Activated naive CD4-positive, alpha-beta T cell treated with anti-CD3 and anti-CD28 coated beads for 36 hours (primary cell): ENCODE measurements at regions of chr10 and their contacts with region 1.

Region 1: GRCh38 chr10:80504158-80504811 is 33.4 kb upstream of the SH2D4B start:
- DNase-seq: no peak
- H3K4me3 Mint-ChIP-seq: no peak overlapping the region
- H3K27ac Mint-ChIP-seq: peak overlapping the region; percentile 54
- H3K4me1 Mint-ChIP-seq: peaks cover 64% of the 10 kb centered on the region
- H3K27me3 Mint-ChIP-seq: no peaks in the 10 kb centered on the region

Region 2: GRCh38 chr10:80453701-80454513 is 50.4 kb before region 1 on chr10 and contains the start of gene TSPAN14:
- CTCF ChIA-PET with region 1: interaction called, 916 read pairs
- intact Hi-C with region 1: loop called (anchors 1 kb)
- DNase-seq: peak; percentile 74
- H3K4me3 Mint-ChIP-seq: peak within 1 kb of the TSS; percentile 98
- H3K27ac Mint-ChIP-seq: peak within 1 kb of the TSS; percentile 93
- H3K4me1 Mint-ChIP-seq: peaks cover 44% of the 10 kb centered on the region
- H3K27me3 Mint-ChIP-seq: no peaks in the 10 kb centered on the region
- total RNA-seq, gene TSPAN14: 33.5 to 35.5 TPM

Region 3: DNA sequence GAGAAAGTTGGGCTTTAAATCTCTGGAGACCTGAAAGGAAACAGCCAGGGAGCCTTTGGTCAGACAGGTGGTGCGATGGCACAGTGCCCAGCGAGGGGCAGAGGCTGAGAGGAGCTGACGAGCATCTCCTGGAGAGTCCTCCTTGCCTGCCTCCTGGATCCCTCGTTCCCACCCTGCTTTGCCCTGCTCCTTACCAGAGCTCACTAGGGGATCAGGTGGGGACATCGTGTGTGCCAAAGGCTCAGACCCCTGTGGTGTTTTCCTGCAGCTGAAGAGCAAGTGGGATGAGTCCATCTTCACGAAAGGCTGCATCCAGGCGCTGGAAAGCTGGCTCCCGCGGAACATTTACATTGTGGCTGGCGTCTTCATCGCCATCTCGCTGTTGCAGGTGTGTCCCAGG is 11.7 kb after region 1 on chr10:
- CTCF ChIA-PET with region 1: interaction called, 29 read pairs
- intact Hi-C with region 1: no loop called
- DNase-seq: no peak
- H3K4me3 Mint-ChIP-seq: no peak overlapping the region
- H3K27ac Mint-ChIP-seq: no peak overlapping the region
- H3K4me1 Mint-ChIP-seq: peaks cover 17% of the 10 kb centered on the region
- H3K27me3 Mint-ChIP-seq: no peaks in the 10 kb centered on the region

Region 4: GRCh38 chr10:80530251-80530650 is 26.0 kb after region 1 on chr10:
- CTCF ChIA-PET with region 1: interaction called, 12 read pairs
- intact Hi-C with region 1: no loop called
- DNase-seq: peak; percentile 84
- H3K4me3 Mint-ChIP-seq: peak overlapping the region; percentile 32
- H3K27ac Mint-ChIP-seq: peak overlapping the region; percentile 72
- H3K4me1 Mint-ChIP-seq: peaks cover 73% of the 10 kb centered on the region
- H3K27me3 Mint-ChIP-seq: no peaks in the 10 kb centered on the region

Region 5: GRCh38 chr10:80612261-80612660 is 108.0 kb after region 1 on chr10:
- CTCF ChIA-PET with region 1: no interaction called
- intact Hi-C with region 1: no loop called
- DNase-seq: no peak
- H3K4me3 Mint-ChIP-seq: no peak overlapping the region
- H3K27ac Mint-ChIP-seq: no peak overlapping the region
- H3K4me1 Mint-ChIP-seq: no peaks in the 10 kb centered on the region
- H3K27me3 Mint-ChIP-seq: no peaks in the 10 kb centered on the region